CD4-positive, alpha-beta T cell (primary cell): ENCODE measurements at regions of chr9 and their contacts with region 1.

Region 1: GRCh38 chr9:132944302-132945185 is at the start of gene TSC1:
- DNase-seq: peak; percentile 96 to 99 (median 98)
- ATAC-seq: peak; percentile 87
- H3K4me3 ChIP-seq: peak within 1 kb of the TSS; percentile 96
- H3K4me3 Mint-ChIP-seq: peak within 1 kb of the TSS; percentile 91
- H3K27ac ChIP-seq: peak within 1 kb of the TSS; percentile 98 to 99
- H3K27ac Mint-ChIP-seq: peak within 1 kb of the TSS; percentile 97
- H3K4me1 ChIP-seq: peaks cover 24% of the 10 kb centered on the region
- H3K4me1 Mint-ChIP-seq: peaks cover 23% of the 10 kb centered on the region
- H3K27me3 ChIP-seq: no peaks in the 10 kb centered on the region
- H3K27me3 Mint-ChIP-seq: no peaks in the 10 kb centered on the region
- CTCF ChIP-seq: no peak
- total RNA-seq, gene TSC1: 50.0 to 51.9 TPM

Region 2: GRCh38 chr9:132079391-132080091 is 865.0 kb before region 1 on chr9 and contains the start of gene MED27:
- CTCF ChIA-PET with region 1: no interaction called
- POLR2A ChIA-PET with region 1: no interaction called
- intact Hi-C with region 1: loop called in 1 of 2 experiments (anchors 10 kb)
- DNase-seq: peak; percentile 81 to 96 (median 92)
- ATAC-seq: peak; percentile 98
- H3K4me3 ChIP-seq: peak within 1 kb of the TSS; percentile 88
- H3K4me3 Mint-ChIP-seq: peak within 1 kb of the TSS; percentile 91
- H3K27ac ChIP-seq: peak within 1 kb of the TSS in 1 of 2 donors; percentile 11
- H3K27ac Mint-ChIP-seq: peak within 1 kb of the TSS; percentile 68
- H3K4me1 ChIP-seq: peaks cover 19% of the 10 kb centered on the region
- H3K4me1 Mint-ChIP-seq: peaks cover 47% of the 10 kb centered on the region
- H3K27me3 ChIP-seq: peaks cover 0 to 2% of the 10 kb centered on the region in 2 experiments
- H3K27me3 Mint-ChIP-seq: peaks cover 11% of the 10 kb centered on the region
- CTCF ChIP-seq: no peak
- total RNA-seq, gene MED27: 15.0 to 17.4 TPM

Region 3: DNA sequence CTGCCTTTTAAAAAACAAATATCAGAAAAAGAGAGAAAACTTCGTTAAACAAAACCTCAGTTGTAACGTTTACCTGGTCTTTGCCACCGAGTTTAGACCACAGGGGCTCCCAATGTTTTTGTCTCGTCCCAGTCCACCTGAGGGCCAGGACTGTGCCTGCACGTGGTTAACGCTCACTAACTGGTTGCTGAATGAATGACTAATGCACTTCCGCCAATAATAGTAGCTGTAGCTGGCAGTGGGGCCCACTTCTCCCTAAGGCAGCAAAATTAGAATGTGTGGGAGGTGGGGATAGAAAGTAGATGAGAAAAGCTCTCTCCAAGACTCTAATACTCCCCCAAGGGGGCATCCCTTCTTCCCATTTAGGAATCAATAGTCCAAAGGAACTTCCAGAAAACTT is 835.8 kb before region 1 on chr9:
- CTCF ChIA-PET with region 1: no interaction called
- POLR2A ChIA-PET with region 1: no interaction called
- intact Hi-C with region 1: no loop called
- DNase-seq: no peak
- ATAC-seq: no peak
- H3K4me3 ChIP-seq: no peak overlapping the region
- H3K4me3 Mint-ChIP-seq: no peak overlapping the region
- H3K27ac ChIP-seq: no peak overlapping the region
- H3K27ac Mint-ChIP-seq: no peak overlapping the region
- H3K4me1 ChIP-seq: no peaks in the 10 kb centered on the region
- H3K4me1 Mint-ChIP-seq: no peaks in the 10 kb centered on the region
- H3K27me3 ChIP-seq: peaks cover 5 to 23% of the 10 kb centered on the region in 2 experiments
- H3K27me3 Mint-ChIP-seq: peaks cover 47% of the 10 kb centered on the region
- CTCF ChIP-seq: no peak

Region 4: DNA sequence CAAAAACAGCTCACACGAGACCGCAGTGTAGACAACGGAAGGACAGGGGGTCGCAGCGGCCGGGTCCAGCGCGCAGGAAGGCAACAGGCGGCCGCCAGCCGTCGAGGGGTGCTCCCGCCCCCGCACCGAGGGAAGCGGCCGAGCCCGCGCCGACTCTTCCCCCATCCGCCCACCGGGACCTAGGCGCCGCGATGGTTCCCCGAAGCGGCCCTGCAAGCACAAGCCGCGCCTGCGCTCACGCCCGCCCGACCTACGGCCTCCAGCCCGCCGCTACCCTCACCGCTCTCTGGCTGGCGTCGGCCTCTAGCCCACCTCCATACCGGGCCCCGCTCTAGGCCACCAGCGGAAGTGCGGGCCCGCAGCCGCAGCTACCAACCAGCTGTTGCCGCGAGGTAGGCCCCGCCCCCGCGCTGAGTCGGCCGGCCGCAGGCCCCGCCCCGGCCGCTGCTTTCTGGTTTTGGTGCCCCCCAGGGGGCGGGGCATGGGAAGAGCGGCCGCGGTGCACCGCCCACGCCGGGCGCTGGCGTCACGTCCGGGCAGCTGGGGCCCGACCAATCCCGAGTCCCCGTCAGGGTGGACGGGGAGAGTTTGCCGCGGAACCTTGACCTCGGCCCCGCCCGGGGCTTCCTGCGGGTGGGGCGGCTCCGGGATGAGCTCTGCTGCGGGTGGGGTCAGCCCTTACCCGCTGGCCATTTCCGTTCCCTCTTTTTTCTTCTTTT is 589.7 kb before region 1 on chr9 and contains the start of gene SETX:
- CTCF ChIA-PET with region 1: no interaction called
- POLR2A ChIA-PET with region 1: interaction called, 6 read pairs
- intact Hi-C with region 1: loop called in 1 of 2 experiments (anchors 10 kb)
- DNase-seq: peak; percentile 88 to 99 (median 96)
- ATAC-seq: peak; percentile 82
- H3K4me3 ChIP-seq: peak within 1 kb of the TSS; percentile 74
- H3K4me3 Mint-ChIP-seq: peak within 1 kb of the TSS; percentile 94
- H3K27ac ChIP-seq: peak within 1 kb of the TSS; percentile 91 to 96
- H3K27ac Mint-ChIP-seq: peak within 1 kb of the TSS; percentile 91
- H3K4me1 ChIP-seq: peaks cover 41% of the 10 kb centered on the region
- H3K4me1 Mint-ChIP-seq: peaks cover 47% of the 10 kb centered on the region
- H3K27me3 ChIP-seq: no peaks in the 10 kb centered on the region
- H3K27me3 Mint-ChIP-seq: no peaks in the 10 kb centered on the region
- CTCF ChIP-seq: no peak
- total RNA-seq, gene SETX: 36.1 to 37.7 TPM

Region 5: GRCh38 chr9:132669698-132670456 is 274.7 kb before region 1 on chr9 and contains the start of gene DDX31:
- CTCF ChIA-PET with region 1: no interaction called
- POLR2A ChIA-PET with region 1: interaction called, 10 read pairs
- intact Hi-C with region 1: loop called in 1 of 2 experiments (anchors 2 kb)
- DNase-seq: peak; percentile 78 to 94 (median 84)
- ATAC-seq: peak; percentile 77
- H3K4me3 ChIP-seq: peak within 1 kb of the TSS; percentile 100
- H3K4me3 Mint-ChIP-seq: peak within 1 kb of the TSS; percentile 98
- H3K27ac ChIP-seq: peak within 1 kb of the TSS; percentile 97 to 99
- H3K27ac Mint-ChIP-seq: peak within 1 kb of the TSS; percentile 92
- H3K4me1 ChIP-seq: peaks cover 32% of the 10 kb centered on the region
- H3K4me1 Mint-ChIP-seq: peaks cover 54% of the 10 kb centered on the region
- H3K27me3 ChIP-seq: no peaks in the 10 kb centered on the region
- H3K27me3 Mint-ChIP-seq: no peaks in the 10 kb centered on the region
- CTCF ChIP-seq: no peak
- total RNA-seq, gene DDX31: 11.0 to 11.3 TPM

Region 6: GRCh38 chr9:132877824-132878694 is 66.5 kb before region 1 on chr9 and contains the start of gene AK8:
- CTCF ChIA-PET with region 1: no interaction called
- POLR2A ChIA-PET with region 1: no interaction called
- intact Hi-C with region 1: loop called in 1 of 2 experiments (anchors 2 kb)
- DNase-seq: peak; percentile 54 to 91 (median 69)
- ATAC-seq: peak; percentile 86
- H3K4me3 ChIP-seq: peak within 1 kb of the TSS; percentile 98
- H3K4me3 Mint-ChIP-seq: peak within 1 kb of the TSS; percentile 93
- H3K27ac ChIP-seq: peak within 1 kb of the TSS in 1 of 2 donors; percentile 44
- H3K27ac Mint-ChIP-seq: peak within 1 kb of the TSS; percentile 90
- H3K4me1 ChIP-seq: peaks cover 25% of the 10 kb centered on the region
- H3K4me1 Mint-ChIP-seq: peaks cover 13% of the 10 kb centered on the region
- H3K27me3 ChIP-seq: no peaks in the 10 kb centered on the region
- H3K27me3 Mint-ChIP-seq: no peaks in the 10 kb centered on the region
- CTCF ChIP-seq: no peak
- total RNA-seq, gene AK8: not detected

Region 7: DNA sequence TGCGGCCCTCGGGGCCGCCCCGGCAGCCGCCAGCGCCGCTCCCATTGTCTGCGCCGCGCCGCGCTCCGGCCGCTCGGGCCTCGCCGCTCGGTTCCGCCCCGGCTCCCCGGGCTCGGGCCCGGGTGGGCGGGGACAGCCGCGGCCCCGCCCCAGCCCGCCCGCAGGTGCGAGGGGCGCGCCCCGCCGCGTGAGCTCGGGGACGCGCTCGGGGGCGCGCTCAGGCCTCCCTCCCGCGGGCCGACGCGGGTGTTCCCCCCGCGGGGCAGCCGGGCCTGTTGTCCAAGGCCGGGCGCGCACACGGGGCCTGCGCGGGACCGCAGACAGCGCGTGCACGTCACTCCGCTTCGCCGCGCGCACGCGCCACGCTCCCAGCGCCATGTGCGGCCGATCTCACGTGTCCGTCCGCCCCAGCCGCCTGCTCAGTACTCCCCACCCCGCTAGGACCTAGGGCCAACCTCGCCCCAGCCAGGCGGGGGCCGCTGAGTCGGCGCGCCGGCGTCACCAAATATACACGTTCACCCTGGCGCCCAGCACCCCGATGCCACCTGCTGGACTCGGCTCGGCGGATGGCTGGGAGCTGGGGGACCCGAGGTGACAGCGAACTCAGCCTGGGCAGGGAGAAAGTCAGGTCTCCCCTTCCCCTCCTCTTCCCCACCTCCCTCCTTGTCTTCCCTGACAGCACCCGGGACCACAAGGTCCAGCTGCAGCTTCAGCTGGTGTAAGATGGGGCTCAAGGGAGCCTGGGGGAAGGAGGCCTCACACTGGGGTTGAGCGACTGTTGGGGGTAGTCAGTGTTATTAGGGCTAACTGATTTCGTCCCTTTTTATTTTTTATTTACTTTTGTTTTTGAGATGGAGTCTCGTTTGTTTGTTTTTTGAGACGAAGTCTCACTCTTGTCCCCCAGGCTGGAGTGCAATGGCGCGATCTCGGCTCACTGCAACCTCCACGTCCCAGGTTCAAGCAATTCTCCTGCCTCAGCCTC is 204.9 kb after region 1 on chr9:
- CTCF ChIA-PET with region 1: no interaction called
- POLR2A ChIA-PET with region 1: no interaction called
- intact Hi-C with region 1: loop called in 1 of 2 experiments (anchors 10 kb)
- DNase-seq: peak; percentile 64 to 95 (median 73)
- ATAC-seq: peak; percentile 43
- H3K4me3 ChIP-seq: peak overlapping the region; percentile 58
- H3K4me3 Mint-ChIP-seq: peak overlapping the region; percentile 88
- H3K27ac ChIP-seq: peak overlapping the region; percentile 60 to 74
- H3K27ac Mint-ChIP-seq: peak overlapping the region; percentile 87
- H3K4me1 ChIP-seq: peaks cover 43% of the 10 kb centered on the region
- H3K4me1 Mint-ChIP-seq: peaks cover 33% of the 10 kb centered on the region
- H3K27me3 ChIP-seq: no peaks in the 10 kb centered on the region
- H3K27me3 Mint-ChIP-seq: no peaks in the 10 kb centered on the region
- CTCF ChIP-seq: peak; percentile 44

Region 8: DNA sequence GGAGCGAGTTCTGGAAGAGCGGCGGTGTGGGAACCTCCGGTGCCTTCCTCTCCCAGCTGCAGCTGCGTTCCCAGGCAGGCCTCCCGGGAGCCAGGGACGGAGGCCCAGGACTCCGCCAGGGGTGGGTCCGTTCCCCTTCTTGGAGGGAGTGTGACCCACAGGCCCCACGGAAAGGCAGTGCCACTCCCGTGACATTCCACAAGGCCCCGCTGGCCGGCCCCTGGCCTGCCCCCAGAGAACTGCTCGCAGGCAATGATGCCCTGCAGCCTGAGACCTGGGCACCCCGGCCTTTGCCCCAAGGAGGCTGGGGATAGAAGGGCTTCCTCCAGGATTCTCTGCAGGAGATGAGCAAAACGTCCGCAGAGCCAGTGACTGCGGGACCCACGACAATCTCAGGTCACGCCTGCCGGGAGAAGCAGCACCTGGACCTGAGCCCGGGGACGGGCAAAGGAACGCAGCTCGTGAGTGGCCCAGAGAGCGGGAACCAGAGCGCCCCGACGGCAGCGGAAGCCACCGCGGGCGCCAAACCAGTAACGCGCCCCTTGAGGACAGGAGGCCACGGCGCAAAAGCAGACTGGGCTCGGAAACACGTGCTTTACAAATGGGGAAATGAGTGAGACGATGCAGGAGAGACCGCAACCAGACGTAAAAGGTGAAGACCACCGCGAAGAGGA is 255.2 kb after region 1 on chr9:
- CTCF ChIA-PET with region 1: no interaction called
- POLR2A ChIA-PET with region 1: no interaction called
- intact Hi-C with region 1: no loop called
- DNase-seq: peak in 9 of 14 experiments; percentile 31 to 66 (median 43)
- ATAC-seq: peak; percentile 96
- H3K4me3 ChIP-seq: peak overlapping the region; percentile 34
- H3K4me3 Mint-ChIP-seq: peak overlapping the region; percentile 81
- H3K27ac ChIP-seq: peak overlapping the region in 1 of 2 donors; percentile 7
- H3K27ac Mint-ChIP-seq: peak overlapping the region; percentile 58
- H3K4me1 ChIP-seq: peaks cover 2% of the 10 kb centered on the region
- H3K4me1 Mint-ChIP-seq: peaks cover 10% of the 10 kb centered on the region
- H3K27me3 ChIP-seq: peaks cover 2 to 8% of the 10 kb centered on the region in 2 experiments
- H3K27me3 Mint-ChIP-seq: peaks cover 5% of the 10 kb centered on the region
- CTCF ChIP-seq: peak; percentile 58

Region 9: DNA sequence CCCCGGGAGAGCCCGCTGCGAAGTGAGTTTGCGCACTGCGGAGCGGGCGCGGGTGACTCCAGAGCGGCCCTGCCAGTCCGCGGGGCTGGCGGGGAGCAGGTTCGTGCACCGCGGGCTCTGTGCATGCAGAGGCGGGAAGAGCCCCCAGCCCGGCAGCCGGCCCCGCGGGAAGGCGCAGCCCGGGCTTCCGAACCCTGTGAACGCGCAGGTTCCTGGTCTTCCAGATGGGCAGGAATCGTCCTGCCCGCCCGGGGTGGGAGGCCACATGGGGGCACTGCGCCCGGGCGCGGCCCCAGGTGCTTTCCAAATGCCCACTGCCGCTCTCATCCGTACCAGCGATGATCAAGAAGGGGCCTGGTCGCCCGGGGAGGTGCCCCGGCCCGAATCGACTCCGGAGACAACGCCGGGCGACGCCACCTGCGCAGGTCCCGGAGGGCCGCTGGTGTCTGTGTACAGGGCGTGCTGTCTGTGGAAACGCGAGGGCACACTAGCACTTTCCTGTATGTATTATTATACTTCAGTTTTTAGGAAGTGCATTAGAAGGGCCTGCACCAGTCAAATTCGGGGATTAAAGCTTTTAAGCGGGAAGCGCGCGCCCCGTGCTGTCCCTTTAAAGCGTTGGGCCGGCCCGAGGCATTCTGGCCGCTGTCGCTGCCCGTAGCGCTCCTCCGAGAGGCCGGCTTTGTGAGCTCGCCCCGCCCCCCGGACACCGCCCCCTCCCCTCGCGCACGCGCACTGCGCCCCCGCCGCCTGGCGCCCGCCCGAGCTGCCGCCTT is 1191.0 kb after region 1 on chr9 and contains the start of gene WDR5:
- CTCF ChIA-PET with region 1: no interaction called
- POLR2A ChIA-PET with region 1: no interaction called
- intact Hi-C with region 1: loop called in 1 of 2 experiments (anchors 5 kb)
- DNase-seq: peak; percentile 87 to 96 (median 90)
- ATAC-seq: peak; percentile 83
- H3K4me3 ChIP-seq: peak within 1 kb of the TSS; percentile 96
- H3K4me3 Mint-ChIP-seq: peak within 1 kb of the TSS; percentile 92
- H3K27ac ChIP-seq: peak within 1 kb of the TSS; percentile 72 to 80
- H3K27ac Mint-ChIP-seq: peak within 1 kb of the TSS; percentile 87
- H3K4me1 ChIP-seq: peaks cover 47% of the 10 kb centered on the region
- H3K4me1 Mint-ChIP-seq: peaks cover 48% of the 10 kb centered on the region
- H3K27me3 ChIP-seq: no peaks in the 10 kb centered on the region
- H3K27me3 Mint-ChIP-seq: no peaks in the 10 kb centered on the region
- CTCF ChIP-seq: no peak
- total RNA-seq, gene WDR5: 14.9 to 16.9 TPM